PC-3 (cell line): ENCODE measurements at regions of chrX and their contacts with region 1.

Region 1: GRCh38 chrX:18886344-18887161 is 97.4 kb downstream of the PHKA2 start:
- DNase-seq: peak; percentile 70
- ATAC-seq: peak; percentile 82
- H3K4me3 ChIP-seq: peak overlapping the region; percentile 66
- H3K27ac ChIP-seq: peak overlapping the region; percentile 55
- H3K4me1 ChIP-seq: peaks cover 20% of the 10 kb centered on the region
- H3K27me3 ChIP-seq: no peaks in the 10 kb centered on the region
- CTCF ChIP-seq: peak; percentile 69

Region 2: GRCh38 chrX:18390941-18391538 is 495.5 kb before region 1 on chrX:
- CTCF ChIA-PET with region 1: no interaction called
- POLR2A ChIA-PET with region 1: no interaction called
- intact Hi-C with region 1: loop called (anchors 5 kb)
- DNase-seq: peak; percentile 67
- ATAC-seq: peak; percentile 54; the same call in 1 of the 2 replicates
- H3K4me3 ChIP-seq: no peak overlapping the region
- H3K27ac ChIP-seq: no peak overlapping the region
- H3K4me1 ChIP-seq: no peaks in the 10 kb centered on the region
- H3K27me3 ChIP-seq: no peaks in the 10 kb centered on the region
- CTCF ChIP-seq: peak; percentile 78

Region 3: DNA sequence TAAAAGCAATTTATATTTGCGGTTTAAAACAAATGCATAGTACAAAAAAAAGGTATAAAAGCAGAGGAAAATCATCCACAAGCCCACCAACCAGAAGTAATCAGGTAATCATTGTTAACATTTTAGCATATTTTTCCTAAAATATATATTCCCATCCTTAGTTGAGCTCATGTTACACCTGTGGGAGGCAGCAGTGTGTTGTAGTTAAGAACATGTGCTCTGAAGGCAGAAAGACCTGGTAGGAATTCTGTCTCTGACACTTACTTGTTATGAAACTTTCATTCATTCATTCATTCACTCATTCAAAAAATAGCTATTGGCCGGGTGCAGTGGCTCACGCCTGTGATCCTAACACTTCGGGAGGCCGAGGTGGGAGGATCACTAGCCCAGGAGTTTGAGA is 476.5 kb before region 1 on chrX:
- CTCF ChIA-PET with region 1: no interaction called
- POLR2A ChIA-PET with region 1: no interaction called
- intact Hi-C with region 1: loop called (anchors 2 kb)
- DNase-seq: peak; percentile 60
- ATAC-seq: peak; percentile 51; the same call in 1 of the 2 replicates
- H3K4me3 ChIP-seq: no peak overlapping the region
- H3K27ac ChIP-seq: no peak overlapping the region
- H3K4me1 ChIP-seq: peaks cover 15% of the 10 kb centered on the region; the same call in 1 of the 2 replicates
- H3K27me3 ChIP-seq: no peaks in the 10 kb centered on the region
- CTCF ChIP-seq: peak; percentile 65

Region 4: GRCh38 chrX:18674788-18675735 is 211.5 kb before region 1 on chrX:
- CTCF ChIA-PET with region 1: no interaction called
- POLR2A ChIA-PET with region 1: no interaction called
- intact Hi-C with region 1: loop called (anchors 1 kb)
- DNase-seq: peak; percentile 86
- ATAC-seq: peak; percentile 82
- H3K4me3 ChIP-seq: peak overlapping the region; percentile 91
- H3K27ac ChIP-seq: peak overlapping the region; percentile 30; the same call in 1 of the 2 replicates
- H3K4me1 ChIP-seq: peaks cover 4% of the 10 kb centered on the region; the same call in 1 of the 2 replicates
- H3K27me3 ChIP-seq: no peaks in the 10 kb centered on the region
- CTCF ChIP-seq: no peak

Region 5: DNA sequence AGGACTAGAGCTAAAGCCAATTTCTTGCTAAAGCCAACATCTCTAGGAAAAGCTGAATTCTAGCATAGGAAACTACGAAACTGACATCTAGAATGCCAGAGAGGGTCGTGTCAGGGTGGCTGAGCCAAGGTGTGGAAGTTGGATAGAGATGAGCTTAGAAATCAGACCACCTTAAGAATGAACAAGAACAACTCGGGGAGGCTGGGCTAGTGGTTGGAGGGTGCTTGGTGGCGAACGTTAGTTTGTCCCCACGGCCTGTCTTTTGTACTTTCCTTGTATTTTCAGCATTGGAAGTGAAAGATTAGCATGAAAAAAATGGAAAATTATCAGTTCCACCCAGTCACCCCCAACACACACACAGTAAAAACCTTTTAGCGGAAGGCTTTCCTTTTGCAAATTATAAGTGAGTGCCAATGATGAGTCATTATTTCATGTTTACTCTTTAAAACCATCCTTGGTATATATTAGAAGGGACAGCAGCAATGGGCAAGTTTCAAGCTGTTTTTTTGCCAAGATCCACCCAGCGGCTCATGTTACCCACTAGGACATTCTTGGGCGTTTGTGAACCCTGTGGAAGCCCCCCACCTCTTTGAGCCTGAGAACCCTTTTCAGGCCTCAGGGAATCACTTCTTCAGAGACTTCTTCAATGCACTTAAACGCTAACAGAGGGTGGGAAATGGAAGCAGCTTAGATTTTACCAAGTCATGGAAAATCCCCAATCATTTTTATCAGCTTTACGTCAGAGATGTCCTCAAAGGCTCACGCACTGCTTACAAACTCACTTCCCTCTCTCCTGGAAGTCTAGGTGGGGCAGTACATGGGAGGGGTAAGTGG is 184.0 kb before region 1 on chrX:
- CTCF ChIA-PET with region 1: no interaction called
- POLR2A ChIA-PET with region 1: no interaction called
- intact Hi-C with region 1: loop called (anchors 5 kb)
- DNase-seq: peak; percentile 80
- ATAC-seq: peak; percentile 80
- H3K4me3 ChIP-seq: peak overlapping the region; percentile 60
- H3K27ac ChIP-seq: peak overlapping the region; percentile 99
- H3K4me1 ChIP-seq: peaks cover 21% of the 10 kb centered on the region
- H3K27me3 ChIP-seq: no peaks in the 10 kb centered on the region
- CTCF ChIP-seq: no peak

Region 6: DNA sequence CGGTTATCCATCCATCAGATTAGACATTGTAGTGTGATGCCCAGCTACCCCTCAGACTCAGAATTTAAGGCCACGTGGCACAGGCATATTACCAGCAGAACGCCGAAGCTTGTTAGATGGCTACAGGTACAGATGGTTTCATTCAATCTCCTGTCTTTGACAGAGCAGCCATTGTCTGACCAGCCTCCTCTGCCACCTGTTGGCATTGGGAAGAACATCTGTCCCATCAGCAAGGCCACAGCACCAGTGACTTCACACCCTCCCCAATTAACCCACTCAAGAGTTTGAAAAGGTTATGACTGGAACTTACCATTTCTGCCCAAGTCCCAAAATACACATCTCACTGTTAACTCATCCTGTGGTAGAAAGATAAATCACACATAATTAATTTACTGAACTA is 119.4 kb after region 1 on chrX:
- CTCF ChIA-PET with region 1: interaction called, 17 read pairs
- POLR2A ChIA-PET with region 1: no interaction called
- intact Hi-C with region 1: no loop called
- DNase-seq: peak; percentile 51
- ATAC-seq: peak; percentile 84
- H3K4me3 ChIP-seq: no peak overlapping the region
- H3K27ac ChIP-seq: no peak overlapping the region
- H3K4me1 ChIP-seq: no peaks in the 10 kb centered on the region
- H3K27me3 ChIP-seq: no peaks in the 10 kb centered on the region
- CTCF ChIP-seq: peak; percentile 62